ENCODE measurements at regions of chr18 and their contacts with region 1.

Region 1: DNA sequence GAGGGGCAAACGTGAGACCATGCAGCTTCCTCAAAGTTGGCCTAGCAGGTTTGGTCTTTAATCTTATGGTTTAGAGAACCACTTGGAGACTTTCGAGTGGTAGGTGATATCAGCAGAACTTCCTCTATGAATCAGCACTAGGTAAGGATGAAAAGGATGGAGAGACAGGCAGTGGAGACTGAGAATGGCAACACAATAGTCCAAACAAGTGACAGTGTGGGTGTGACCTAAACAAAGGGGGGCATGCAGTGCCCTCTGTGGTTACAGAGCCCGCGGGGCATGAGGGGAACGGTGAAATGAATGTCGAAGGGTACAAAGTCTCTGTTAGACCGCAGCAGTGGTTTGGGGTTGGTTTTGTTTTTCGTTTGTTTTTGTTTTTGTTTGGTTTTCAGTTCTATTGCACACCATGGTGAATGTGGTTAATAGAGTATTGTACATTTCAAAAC is 143.9 kb downstream of the L3MBTL4 start:
- DNase-seq: peak; percentile 17 to 52
- ATAC-seq: peak; percentile 65 to 76 (median 74)
- H3K4me3 ChIP-seq: no peak overlapping the region
- H3K4me3 Mint-ChIP-seq: peak overlapping the region; percentile 86
- H3K27ac ChIP-seq: peak overlapping the region; percentile 51
- H3K27ac Mint-ChIP-seq: peak overlapping the region; percentile 82 to 86
- H3K4me1 ChIP-seq: peaks cover 27% of the 10 kb centered on the region
- H3K4me1 Mint-ChIP-seq: peaks cover 30 to 49% of the 10 kb centered on the region in 2 donors
- H3K27me3 ChIP-seq: no peaks in the 10 kb centered on the region
- H3K27me3 Mint-ChIP-seq: no peaks in the 10 kb centered on the region
- CTCF ChIP-seq: no peak

Region 2: GRCh38 chr18:6249788-6250187 is 21.0 kb before region 1 on chr18:
- intact Hi-C with region 1: loop called (anchors 1 kb)
- DNase-seq: no peak
- ATAC-seq: no peak
- H3K4me3 ChIP-seq: no peak overlapping the region
- H3K4me3 Mint-ChIP-seq: no peak overlapping the region
- H3K27ac ChIP-seq: no peak overlapping the region
- H3K27ac Mint-ChIP-seq: peak overlapping the region; percentile 79 to 85
- H3K4me1 ChIP-seq: peaks cover 4% of the 10 kb centered on the region
- H3K4me1 Mint-ChIP-seq: peaks cover 32 to 37% of the 10 kb centered on the region in 2 donors
- H3K27me3 ChIP-seq: no peaks in the 10 kb centered on the region
- H3K27me3 Mint-ChIP-seq: no peaks in the 10 kb centered on the region
- CTCF ChIP-seq: no peak

Region 3: GRCh38 chr18:6413579-6414117 is 142.9 kb after region 1 on chr18:
- intact Hi-C with region 1: loop called (anchors 2 kb)
- DNase-seq: no peak
- ATAC-seq: no peak
- H3K4me3 ChIP-seq: peak overlapping the region; percentile 82
- H3K4me3 Mint-ChIP-seq: peak overlapping the region; percentile 94
- H3K27ac ChIP-seq: peak overlapping the region; percentile 86
- H3K27ac Mint-ChIP-seq: peak overlapping the region; percentile 89 to 97
- H3K4me1 ChIP-seq: peaks cover 21% of the 10 kb centered on the region
- H3K4me1 Mint-ChIP-seq: peaks cover 46 to 48% of the 10 kb centered on the region in 2 donors
- H3K27me3 ChIP-seq: no peaks in the 10 kb centered on the region
- H3K27me3 Mint-ChIP-seq: no peaks in the 10 kb centered on the region
- CTCF ChIP-seq: no peak